ENCODE measurements at regions of chr19 and their contacts with region 1.

Region 1: GRCh38 chr19:51777570-51778462 is 16.8 kb downstream of the FPR2 start:
- DNase-seq: peak; percentile 68 to 96 (median 71)
- ATAC-seq: peak; percentile 99
- H3K4me3 ChIP-seq: no peak overlapping the region
- H3K27ac ChIP-seq: peak overlapping the region; percentile 42
- H3K4me1 ChIP-seq: peaks cover 6 to 35% of the 10 kb centered on the region in 2 experiments; a peak in 3 of 5 replicates
- H3K27me3 ChIP-seq: no peaks in the 10 kb centered on the region
- CTCF ChIP-seq: peak; percentile 84 to 92 (median 88)
- EP300 ChIP-seq: peak; percentile 49; the same call in 1 of the 2 replicates
- POLR2A ChIP-seq: no peak
- RAD21 ChIP-seq: peak; percentile 86 to 90

Region 2: DNA sequence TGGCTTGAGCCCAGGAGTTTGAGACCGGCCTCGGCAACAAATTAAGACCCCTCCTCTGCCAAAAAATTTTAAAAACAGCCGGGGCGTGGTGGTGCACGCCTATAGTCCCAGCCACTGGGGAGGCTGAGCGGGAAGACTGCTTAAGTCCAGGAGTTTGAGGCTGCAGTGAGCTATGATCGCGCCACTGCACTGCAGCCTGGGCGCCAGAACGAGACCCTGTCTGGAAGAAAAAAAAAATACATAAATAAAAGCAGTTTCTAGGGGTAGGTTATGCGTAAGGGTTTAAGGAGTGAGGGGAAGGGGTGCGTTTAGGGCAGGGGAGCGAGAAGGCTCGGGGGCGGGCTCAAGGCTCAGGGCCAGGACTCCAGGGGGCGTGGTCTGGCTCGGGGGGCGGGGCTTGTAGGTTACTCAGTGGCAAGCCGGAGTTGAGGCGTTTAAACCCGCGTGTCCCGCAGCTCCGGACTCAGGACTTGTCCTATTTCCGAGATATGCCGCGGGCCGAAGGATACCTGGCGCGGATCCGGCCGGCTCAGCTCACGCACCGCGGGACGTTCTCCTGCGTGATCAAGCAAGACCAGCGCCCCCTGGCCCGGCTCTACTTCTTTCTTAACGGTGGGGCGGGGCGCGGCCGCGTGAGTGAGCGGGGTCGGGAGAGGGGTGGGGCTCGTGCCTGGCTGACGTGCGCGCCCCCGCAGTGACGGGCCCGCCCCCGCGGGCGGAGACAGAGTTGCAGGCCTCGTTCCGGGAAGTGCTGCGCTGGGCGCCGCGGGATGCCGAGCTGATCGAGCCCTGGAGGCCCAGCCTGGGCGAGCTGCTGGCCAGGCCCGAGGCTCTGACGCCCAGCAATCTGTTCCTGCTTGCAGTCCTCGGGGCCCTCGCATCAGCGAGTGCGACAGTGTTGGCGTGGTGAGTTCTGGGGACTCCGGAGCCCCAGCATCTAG is 74.0 kb before region 1 on chr19:
- CTCF ChIA-PET with region 1: no interaction called
- POLR2A ChIA-PET with region 1: no interaction called
- in situ Hi-C with region 1: no loop called
- intact Hi-C with region 1: loop called (anchors 5 kb)
- DNase-seq: peak; percentile 95 to 97 (median 97)
- ATAC-seq: peak; percentile 85
- H3K4me3 ChIP-seq: peak overlapping the region; percentile 74
- H3K27ac ChIP-seq: peak overlapping the region; percentile 83
- H3K4me1 ChIP-seq: peaks cover 34 to 44% of the 10 kb centered on the region in 2 experiments
- H3K27me3 ChIP-seq: no peaks in the 10 kb centered on the region
- CTCF ChIP-seq: peak; percentile 53 to 60 (median 59); a peak in 5 of 6 replicates
- EP300 ChIP-seq: no peak
- POLR2A ChIP-seq: peak; percentile 84
- RAD21 ChIP-seq: peak in 1 of 2 experiments; percentile 18; a peak in 2 of 4 replicates

Region 3: DNA sequence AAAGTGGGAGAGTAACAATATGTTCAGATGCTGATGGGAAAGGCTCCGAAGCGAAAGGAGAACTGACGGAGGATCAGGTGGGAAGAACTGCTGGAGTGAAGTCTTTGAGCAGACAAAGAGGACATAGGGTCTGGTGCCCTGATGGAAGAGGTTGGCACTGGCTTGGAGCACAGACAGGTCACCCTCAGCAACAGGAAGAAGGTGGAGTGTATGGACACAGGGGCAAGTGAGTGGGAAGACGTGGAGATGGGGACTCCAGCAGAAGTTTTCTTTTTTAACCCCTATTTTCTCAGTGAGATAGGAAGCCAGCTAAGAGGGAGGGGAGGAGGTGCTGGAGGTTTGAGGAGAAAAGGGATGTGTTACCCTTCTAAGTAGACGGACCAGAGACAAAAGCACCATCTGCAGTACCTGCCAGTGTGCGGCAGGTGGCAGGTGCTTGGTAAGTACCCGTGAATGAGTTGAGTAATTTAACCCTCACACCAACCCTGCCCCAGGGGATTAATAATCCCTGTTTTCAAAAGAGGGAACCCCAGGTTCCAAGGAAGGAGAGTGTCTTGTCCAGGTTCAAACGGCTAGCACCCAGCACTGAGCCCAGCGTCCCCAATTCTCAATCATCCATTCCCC is 65.2 kb before region 1 on chr19:
- CTCF ChIA-PET with region 1: interaction called, 9 read pairs
- POLR2A ChIA-PET with region 1: interaction called, 4 read pairs
- in situ Hi-C with region 1: loop called (anchors 5 kb)
- intact Hi-C with region 1: loop called (anchors 1 kb)
- DNase-seq: peak in 2 of 4 experiments; percentile 50 to 65
- ATAC-seq: peak; percentile 75
- H3K4me3 ChIP-seq: no peak overlapping the region
- H3K27ac ChIP-seq: no peak overlapping the region
- H3K4me1 ChIP-seq: peaks cover 0 to 13% of the 10 kb centered on the region in 2 experiments; a peak in 2 of 5 replicates
- H3K27me3 ChIP-seq: peaks cover 0 to 7% of the 10 kb centered on the region in 2 experiments; a peak in 2 of 5 replicates
- CTCF ChIP-seq: peak; percentile 59 to 70 (median 63)
- EP300 ChIP-seq: no peak
- POLR2A ChIP-seq: no peak
- RAD21 ChIP-seq: peak; percentile 32 to 57; a peak in 3 of 4 replicates

Region 4: DNA sequence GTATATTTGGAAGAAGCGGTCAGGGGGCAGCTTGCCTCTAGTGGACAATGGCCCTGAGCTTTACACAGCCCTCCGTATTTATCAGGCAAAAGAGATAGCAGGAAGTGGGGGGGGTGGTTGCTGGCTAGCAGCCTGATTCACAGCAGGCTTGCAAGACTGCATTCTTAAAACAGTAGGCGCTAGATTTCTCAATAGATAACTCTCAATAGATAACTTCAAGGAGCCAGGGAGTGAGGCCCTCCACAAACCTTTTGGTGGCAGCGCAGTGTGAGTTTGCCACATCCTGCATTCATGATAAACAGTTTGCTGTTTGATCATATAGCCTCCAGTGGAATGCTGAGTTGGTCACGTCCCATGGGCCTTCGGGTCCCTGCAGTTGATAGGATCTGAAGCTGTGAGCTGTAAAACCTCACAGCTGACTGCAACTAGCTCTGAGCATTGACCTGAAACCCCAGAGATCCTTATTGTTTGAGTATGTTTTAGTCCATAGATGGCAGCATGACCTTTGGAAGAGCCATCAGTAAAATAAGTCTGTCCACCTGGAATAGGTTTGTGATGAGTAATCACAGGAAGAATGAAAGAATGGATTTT is 29.4 kb after region 1 on chr19:
- CTCF ChIA-PET with region 1: no interaction called
- POLR2A ChIA-PET with region 1: interaction called, 3 read pairs
- in situ Hi-C with region 1: no loop called
- intact Hi-C with region 1: loop called (anchors 2 kb)
- DNase-seq: peak; percentile 42 to 85 (median 52)
- ATAC-seq: peak; percentile 77
- H3K4me3 ChIP-seq: no peak overlapping the region
- H3K27ac ChIP-seq: peak overlapping the region; percentile 67
- H3K4me1 ChIP-seq: peaks cover 5 to 59% of the 10 kb centered on the region in 2 experiments; a peak in 4 of 5 replicates
- H3K27me3 ChIP-seq: no peaks in the 10 kb centered on the region
- CTCF ChIP-seq: peak in 2 of 3 experiments; percentile 18 to 41; a peak in 1 of 6 replicates
- EP300 ChIP-seq: peak; percentile 58
- POLR2A ChIP-seq: no peak
- RAD21 ChIP-seq: peak; percentile 24 to 31; a peak in 3 of 4 replicates